ENCODE measurements at regions of chr2 and their contacts with region 1.

Region 1: GRCh38 chr2:236576087-236576486 is 6.5 kb downstream of the ACKR3 start:
- DNase-seq: no peak
- H3K4me3 ChIP-seq: peak overlapping the region; percentile 3 to 6
- H3K27ac ChIP-seq: peak overlapping the region; percentile 83 to 97
- H3K4me1 ChIP-seq: peaks cover 0 to 96% (median 52%) of the 10 kb centered on the region in 4 donors
- H3K27me3 ChIP-seq: no peaks in the 10 kb centered on the region
- CTCF ChIP-seq: no peak

Region 2: GRCh38 chr2:236642584-236643291 is 66.7 kb after region 1 on chr2:
- intact Hi-C with region 1: loop called (anchors 2 kb)
- DNase-seq: peak; percentile 98 to 99
- H3K4me3 ChIP-seq: peak overlapping the region; percentile 24 to 34
- H3K27ac ChIP-seq: peak overlapping the region; percentile 80 to 84
- H3K4me1 ChIP-seq: peaks cover 0 to 52% (median 23%) of the 10 kb centered on the region in 4 donors
- H3K27me3 ChIP-seq: no peaks in the 10 kb centered on the region
- CTCF ChIP-seq: peak in 1 of 2 experiments; percentile 4

Region 3: GRCh38 chr2:236731878-236732580 is 155.9 kb after region 1 on chr2:
- intact Hi-C with region 1: loop called (anchors 5 kb)
- DNase-seq: peak; percentile 91 to 94
- H3K4me3 ChIP-seq: no peak overlapping the region
- H3K27ac ChIP-seq: peak overlapping the region; percentile 66 to 73
- H3K4me1 ChIP-seq: peaks cover 0 to 16% (median 14%) of the 10 kb centered on the region in 4 donors
- H3K27me3 ChIP-seq: no peaks in the 10 kb centered on the region
- CTCF ChIP-seq: no peak

Region 4: GRCh38 chr2:236887531-236887930 is 311.4 kb after region 1 on chr2:
- intact Hi-C with region 1: loop called (anchors 10 kb)
- DNase-seq: peak in 1 of 2 donors; percentile 77
- H3K4me3 ChIP-seq: peak overlapping the region in 1 of 2 donors; percentile 16
- H3K27ac ChIP-seq: peak overlapping the region; percentile 82 to 92
- H3K4me1 ChIP-seq: peaks cover 0 to 42% (median 26%) of the 10 kb centered on the region in 4 donors
- H3K27me3 ChIP-seq: no peaks in the 10 kb centered on the region
- CTCF ChIP-seq: no peak

Region 5: GRCh38 chr2:237026981-237027711 is 451.1 kb after region 1 on chr2:
- intact Hi-C with region 1: loop called (anchors 10 kb)
- DNase-seq: peak; percentile 80 to 87
- H3K4me3 ChIP-seq: no peak overlapping the region
- H3K27ac ChIP-seq: no peak overlapping the region
- H3K4me1 ChIP-seq: peaks cover 0 to 4% (median 0%) of the 10 kb centered on the region in 4 donors
- H3K27me3 ChIP-seq: no peaks in the 10 kb centered on the region
- CTCF ChIP-seq: peak; percentile 85 to 90

Region 6: GRCh38 chr2:237421542-237422116 is 845.5 kb after region 1 on chr2:
- intact Hi-C with region 1: no loop called
- DNase-seq: peak; percentile 79 to 89
- H3K4me3 ChIP-seq: peak overlapping the region; percentile 15 to 33
- H3K27ac ChIP-seq: peak overlapping the region; percentile 47 to 58
- H3K4me1 ChIP-seq: peaks cover 0 to 12% (median 7%) of the 10 kb centered on the region in 4 donors
- H3K27me3 ChIP-seq: no peaks in the 10 kb centered on the region
- CTCF ChIP-seq: peak; percentile 83 to 90